Mucosa of descending colon (tissue), 3 donors: ENCODE measurements at regions of chr17 and their contacts with region 1.

Region 1: DNA sequence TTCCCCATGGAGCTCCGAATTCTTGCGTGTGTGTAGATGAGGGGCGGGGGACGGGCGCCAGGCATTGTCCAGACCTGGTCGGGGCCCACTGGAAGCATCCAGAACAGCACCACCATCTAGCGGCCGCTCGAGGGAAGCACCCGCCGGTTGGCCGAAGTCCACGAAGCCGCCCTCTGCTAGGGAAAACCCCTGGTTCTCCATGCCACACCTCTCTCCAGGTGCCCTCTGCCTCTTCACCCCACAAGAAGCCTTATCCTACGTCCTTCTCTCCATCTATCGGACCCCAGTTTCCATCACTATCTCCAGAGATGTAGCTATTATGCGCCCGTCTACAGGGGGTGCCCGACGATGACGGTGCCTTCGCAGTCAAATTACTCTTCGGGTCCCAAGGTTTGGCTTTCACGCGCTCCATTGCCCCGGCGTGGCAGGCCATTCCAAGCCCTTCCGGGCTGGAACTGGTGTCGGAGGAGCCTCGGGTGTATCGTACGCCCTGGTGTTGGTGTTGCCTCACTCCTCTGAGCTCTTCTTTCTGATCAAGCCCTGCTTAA is 617 bp upstream of the SENP3 start:
- DNase-seq: peak; percentile 96 to 97 (median 97)
- ATAC-seq: peak; percentile 70
- H3K4me3 ChIP-seq: peak overlapping the region; percentile 72
- H3K4me1 ChIP-seq: peaks cover 55% of the 10 kb centered on the region
- CTCF ChIP-seq: peak; percentile 92

Region 2: GRCh38 chr17:7435221-7435675 is 125.9 kb before region 1 on chr17 and contains the start of gene TMEM102:
- intact Hi-C with region 1: loop called in 1 of 2 experiments (anchors 2 kb)
- DNase-seq: peak; percentile 98 to 99 (median 99)
- ATAC-seq: peak; percentile 87
- H3K4me3 ChIP-seq: peak within 1 kb of the TSS; percentile 32
- H3K4me1 ChIP-seq: peaks cover 20% of the 10 kb centered on the region
- CTCF ChIP-seq: no peak
- total RNA-seq, gene TMEM102: 8.8 to 22.5 (median 16.4) TPM

Region 3: DNA sequence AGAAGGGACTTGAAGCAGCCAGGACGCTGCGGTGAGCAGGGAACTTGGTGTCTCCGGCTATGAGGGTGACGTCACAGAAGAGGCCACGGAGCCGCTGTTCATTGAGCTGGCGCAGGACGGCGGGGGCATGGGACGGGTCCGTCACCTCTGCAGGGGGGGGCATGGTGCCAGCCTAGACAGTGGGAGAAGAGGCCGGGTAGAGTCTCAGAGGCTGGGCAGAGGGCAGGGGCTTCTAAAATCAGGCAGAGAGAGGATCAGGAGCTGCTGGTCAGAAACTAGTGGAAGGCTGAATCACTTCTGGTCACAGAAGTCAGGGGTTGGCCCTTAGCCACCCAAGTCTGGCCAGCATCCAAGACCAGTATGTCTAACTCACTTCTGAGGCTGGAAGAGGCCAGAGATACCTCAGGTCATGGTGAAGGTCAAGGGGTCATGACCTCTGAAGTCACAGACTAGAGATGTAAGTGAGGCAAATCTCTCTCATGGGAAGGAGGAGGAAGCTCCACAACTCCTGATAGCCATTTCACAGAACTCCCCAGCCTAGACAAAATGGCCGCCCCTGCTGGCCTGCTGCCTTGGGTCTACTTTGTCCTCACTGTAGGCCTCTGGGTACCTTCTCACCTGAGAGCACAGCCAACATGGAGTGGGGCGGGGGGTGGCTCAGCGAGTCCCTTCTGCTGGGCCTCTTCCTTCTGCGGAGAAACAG is 94.3 kb before region 1 on chr17:
- intact Hi-C with region 1: no loop called
- DNase-seq: peak in 1 of 3 donors; percentile 47
- ATAC-seq: peak; percentile 19
- H3K4me3 ChIP-seq: no peak overlapping the region
- H3K4me1 ChIP-seq: peaks cover 6% of the 10 kb centered on the region
- CTCF ChIP-seq: no peak

Region 4: GRCh38 chr17:7513850-7514419 is 47.2 kb before region 1 on chr17:
- intact Hi-C with region 1: loop called in 1 of 2 experiments (anchors 5 kb)
- DNase-seq: no peak
- ATAC-seq: no peak
- H3K4me3 ChIP-seq: no peak overlapping the region
- H3K4me1 ChIP-seq: peaks cover 8% of the 10 kb centered on the region
- CTCF ChIP-seq: no peak